A549 (cell line): ENCODE measurements at regions of chr7 and their contacts with region 1.

Region 1: DNA sequence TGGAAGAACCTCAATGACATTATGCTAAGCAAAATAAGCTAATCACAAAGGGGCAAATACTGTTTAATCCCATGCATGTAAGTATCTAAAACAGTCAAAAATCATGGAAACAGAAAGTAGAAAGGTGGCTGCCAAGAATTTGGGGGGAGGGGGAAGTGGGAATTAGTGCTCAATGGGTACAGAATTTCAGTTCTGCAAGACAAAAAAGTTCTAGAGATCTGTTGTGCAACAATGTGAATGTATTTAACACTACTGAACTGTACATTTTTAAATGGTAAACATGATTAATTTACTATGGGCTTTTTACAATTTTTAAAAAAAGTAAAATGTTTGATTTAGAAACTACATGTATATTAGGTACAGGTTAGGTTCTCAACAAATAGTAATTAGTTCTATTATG is 11.9 kb downstream of the EZH2 start:
- DNase-seq: no peak
- ATAC-seq: no peak
- H3K4me3 ChIP-seq: no peak overlapping the region
- H3K27ac ChIP-seq: no peak overlapping the region
- H3K4me1 ChIP-seq: no peaks in the 10 kb centered on the region
- CTCF ChIP-seq: no peak
- EP300 ChIP-seq: no peak
- POLR2A ChIP-seq: no peak
- RAD21 ChIP-seq: no peak

Region 2: GRCh38 chr7:148856891-148857290 is 15.3 kb before region 1 on chr7:
- CTCF ChIA-PET with region 1: interaction called, 17 read pairs
- POLR2A ChIA-PET with region 1: interaction called, 4 read pairs
- DNase-seq: no peak
- ATAC-seq: peak in 1 of 2 experiments; percentile 24; a peak in 2 of 6 replicates
- H3K4me3 ChIP-seq: no peak overlapping the region
- H3K27ac ChIP-seq: no peak overlapping the region
- H3K4me1 ChIP-seq: 0 out of 3 replicates have a peak, but pooled peaks cover 4% of the 10 kb centered on the region
- CTCF ChIP-seq: no peak
- EP300 ChIP-seq: no peak
- POLR2A ChIP-seq: no peak
- RAD21 ChIP-seq: no peak